PC-3 (cell line): ENCODE measurements at regions of chr19 and their contacts with region 1.

Region 1: GRCh38 chr19:55166530-55167268 is at the start of gene DNAAF3:
- DNase-seq: peak; percentile 99
- ATAC-seq: peak; percentile 96
- H3K4me3 ChIP-seq: peak within 1 kb of the TSS; percentile 73
- H3K27ac ChIP-seq: peak within 1 kb of the TSS; percentile 60
- H3K4me1 ChIP-seq: peaks cover 12% of the 10 kb centered on the region; the same call in 1 of the 2 replicates
- H3K27me3 ChIP-seq: no peaks in the 10 kb centered on the region
- CTCF ChIP-seq: no peak
- total RNA-seq, gene DNAAF3: 30.0 and 45.7 TPM in 2 replicates

Region 2: DNA sequence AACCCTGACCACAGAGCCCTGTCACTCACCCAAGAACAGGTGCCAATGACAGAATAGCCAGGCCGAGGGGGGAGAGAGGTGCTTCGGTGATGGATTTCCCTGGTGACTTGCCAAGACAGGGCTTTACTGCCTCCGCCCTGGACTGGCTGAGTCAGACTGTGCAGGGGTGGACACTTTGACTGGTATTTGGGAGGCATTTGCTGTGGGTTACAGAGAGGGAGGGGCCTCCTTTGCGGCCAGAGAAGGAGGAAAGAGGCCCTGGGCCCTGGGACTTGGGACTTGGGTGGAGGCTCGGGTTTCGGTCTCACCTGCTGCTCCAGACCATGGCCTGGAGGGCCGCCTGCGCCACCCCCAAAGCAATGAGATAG is 95.6 kb before region 1 on chr19:
- CTCF ChIA-PET with region 1: no interaction called
- POLR2A ChIA-PET with region 1: no interaction called
- intact Hi-C with region 1: loop called (anchors 10 kb)
- DNase-seq: peak; percentile 99
- ATAC-seq: peak; percentile 76
- H3K4me3 ChIP-seq: no peak overlapping the region
- H3K27ac ChIP-seq: peak overlapping the region; percentile 96
- H3K4me1 ChIP-seq: peaks cover 36% of the 10 kb centered on the region
- H3K27me3 ChIP-seq: no peaks in the 10 kb centered on the region
- CTCF ChIP-seq: no peak

Region 3: DNA sequence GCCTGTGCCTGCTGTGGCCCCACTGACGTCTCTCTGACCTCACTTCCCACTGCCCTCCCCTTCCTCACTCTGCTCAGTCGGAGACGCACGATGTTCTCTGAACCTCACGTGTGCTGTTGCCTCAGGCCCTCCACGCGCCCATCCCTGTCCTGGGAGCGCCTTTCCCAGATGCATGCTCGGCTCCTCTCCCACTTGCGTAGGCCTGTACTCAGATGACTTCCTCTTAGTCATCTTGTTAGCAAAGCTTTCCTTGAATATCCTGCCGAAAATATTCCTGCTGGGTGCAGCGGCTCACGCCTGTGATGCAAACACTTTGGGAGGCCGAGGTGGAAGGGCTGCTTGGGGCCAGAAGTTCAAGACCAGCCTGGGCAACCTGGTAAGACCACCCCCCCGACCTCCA is 22.7 kb after region 1 on chr19:
- CTCF ChIA-PET with region 1: interaction called, 3 read pairs
- POLR2A ChIA-PET with region 1: interaction called, 3 read pairs
- intact Hi-C with region 1: loop called (anchors 1 kb)
- DNase-seq: peak; percentile 99
- ATAC-seq: peak; percentile 99
- H3K4me3 ChIP-seq: no peak overlapping the region
- H3K27ac ChIP-seq: peak overlapping the region; percentile 89
- H3K4me1 ChIP-seq: peaks cover 12% of the 10 kb centered on the region
- H3K27me3 ChIP-seq: no peaks in the 10 kb centered on the region
- CTCF ChIP-seq: no peak

Region 4: DNA sequence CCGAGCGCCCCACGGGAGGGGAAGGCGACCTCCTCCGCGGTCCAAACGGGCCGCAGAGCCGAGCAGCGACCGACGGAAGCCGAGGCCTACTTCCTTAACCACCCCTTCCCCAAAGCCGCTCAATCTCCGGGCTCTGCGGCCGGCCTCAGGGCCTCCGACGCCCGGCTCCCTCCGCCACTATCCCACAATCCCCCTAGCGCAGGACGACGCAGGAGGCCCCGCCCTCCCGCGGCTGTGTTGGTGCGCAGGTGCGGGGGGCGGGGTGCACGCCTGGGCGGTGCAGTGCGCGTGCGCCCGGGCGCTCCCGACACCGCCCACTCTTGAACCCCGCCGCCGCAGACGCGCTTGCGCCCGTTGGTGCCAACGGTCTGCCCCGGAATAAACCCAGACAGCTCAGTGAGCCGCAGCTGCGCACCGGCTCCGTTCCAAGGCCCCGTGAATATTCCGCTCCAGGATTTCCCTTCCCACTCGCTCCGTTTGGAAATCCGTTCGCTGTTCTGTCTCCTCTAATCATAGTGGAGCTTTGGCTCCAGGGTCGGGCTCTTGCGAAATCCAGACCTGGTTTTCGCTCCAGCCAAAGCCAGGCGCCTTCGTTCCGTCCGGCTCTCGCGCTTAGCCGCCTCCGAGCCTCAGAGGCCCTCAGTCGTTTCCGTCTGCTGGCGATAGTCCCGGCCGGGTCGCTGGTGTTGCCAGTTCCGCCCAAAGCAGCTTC is 92.3 kb after region 1 on chr19 and contains the start of gene PPP6R1:
- CTCF ChIA-PET with region 1: no interaction called
- POLR2A ChIA-PET with region 1: no interaction called
- intact Hi-C with region 1: loop called (anchors 5 kb)
- DNase-seq: peak; percentile 100
- ATAC-seq: peak; percentile 78
- H3K4me3 ChIP-seq: peak within 1 kb of the TSS; percentile 95
- H3K27ac ChIP-seq: peak within 1 kb of the TSS; percentile 95
- H3K4me1 ChIP-seq: peaks cover 40% of the 10 kb centered on the region
- H3K27me3 ChIP-seq: no peaks in the 10 kb centered on the region
- CTCF ChIP-seq: no peak
- total RNA-seq, gene PPP6R1: 159 and 221 TPM in 2 replicates

Region 5: DNA sequence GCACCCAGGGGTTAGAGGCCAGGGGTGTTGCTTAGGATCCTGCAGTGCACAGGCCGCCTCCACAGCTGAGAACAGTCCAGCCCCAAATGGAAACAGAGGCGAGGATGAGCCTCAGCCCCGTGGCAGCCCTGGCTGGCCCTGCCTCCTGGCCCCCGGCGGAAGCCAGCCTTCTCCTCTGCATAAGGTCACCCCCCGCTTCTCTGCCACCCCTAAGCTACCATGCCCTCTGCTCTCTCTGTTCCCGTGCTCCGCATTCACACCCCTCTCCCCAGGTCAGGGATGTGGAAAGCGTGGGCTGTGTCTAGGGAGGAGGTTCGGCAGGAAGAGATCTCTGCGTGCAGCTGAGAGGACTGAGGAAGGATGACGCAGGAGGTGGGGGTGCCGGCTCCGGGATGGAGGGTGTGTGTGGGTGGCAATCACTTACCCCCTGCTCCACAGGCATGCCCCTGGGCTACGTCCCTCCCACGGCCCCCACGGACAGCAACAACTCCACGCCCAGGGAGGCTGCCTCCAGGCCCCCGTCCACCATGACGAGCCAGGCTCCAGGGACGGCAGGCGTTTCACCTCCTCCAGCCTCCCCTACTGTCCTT is 327.6 kb after region 1 on chr19:
- CTCF ChIA-PET with region 1: no interaction called
- POLR2A ChIA-PET with region 1: no interaction called
- intact Hi-C with region 1: no loop called
- DNase-seq: no peak
- ATAC-seq: no peak
- H3K4me3 ChIP-seq: no peak overlapping the region
- H3K27ac ChIP-seq: no peak overlapping the region
- H3K4me1 ChIP-seq: no peaks in the 10 kb centered on the region
- H3K27me3 ChIP-seq: no peaks in the 10 kb centered on the region
- CTCF ChIP-seq: no peak